GM12878 (cell line): ENCODE measurements at regions of chr14 and their contacts with region 1.

Region 1: DNA sequence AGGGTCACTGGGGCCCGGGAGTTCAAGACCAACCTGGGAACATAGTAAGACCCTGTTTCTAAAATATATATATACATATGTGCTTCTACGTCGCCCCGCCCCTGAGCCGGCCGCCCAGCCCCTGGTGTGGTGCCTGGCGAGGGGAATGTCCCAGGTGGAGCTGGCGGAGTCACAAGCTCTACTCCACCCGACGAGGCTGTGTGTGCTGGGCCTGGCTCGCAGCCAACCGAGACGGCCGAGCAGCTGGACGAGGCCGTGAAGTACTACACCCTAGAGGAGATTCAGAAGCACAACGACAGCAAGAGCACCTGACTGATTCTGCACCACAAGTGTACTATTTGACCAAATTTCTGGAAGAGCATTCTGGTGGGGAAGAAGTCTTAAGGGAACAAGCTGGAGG is 22.1 kb upstream of the ITPK1 start:
- DNase-seq: no peak
- ATAC-seq: no peak
- H3K4me3 ChIP-seq: no peak overlapping the region
- H3K27ac ChIP-seq: no peak overlapping the region
- H3K4me1 ChIP-seq: no peaks in the 10 kb centered on the region
- H3K27me3 ChIP-seq: no peaks in the 10 kb centered on the region
- CTCF ChIP-seq: no peak
- EP300 ChIP-seq: no peak
- POLR2A ChIP-seq: no peak
- RAD21 ChIP-seq: no peak

Region 2: GRCh38 chr14:92986254-92987147 is 151.4 kb before region 1 on chr14:
- CTCF ChIA-PET with region 1: no interaction called
- POLR2A ChIA-PET with region 1: no interaction called
- RAD21 ChIA-PET with region 1: no interaction called
- SMC1A ChIA-PET with region 1: no interaction called
- in situ Hi-C with region 1: no loop called
- intact Hi-C with region 1: no loop called
- DNase-seq: no peak
- ATAC-seq: no peak
- H3K4me3 ChIP-seq: no peak overlapping the region
- H3K27ac ChIP-seq: no peak overlapping the region
- H3K4me1 ChIP-seq: no peaks in the 10 kb centered on the region
- H3K27me3 ChIP-seq: no peaks in the 10 kb centered on the region
- CTCF ChIP-seq: no peak
- EP300 ChIP-seq: no peak
- POLR2A ChIP-seq: no peak
- RAD21 ChIP-seq: no peak

Region 3: GRCh38 chr14:93219103-93219726 is 81.4 kb after region 1 on chr14:
- CTCF ChIA-PET with region 1: interaction called, 9 read pairs
- POLR2A ChIA-PET with region 1: no interaction called
- RAD21 ChIA-PET with region 1: interaction called, 6 read pairs
- SMC1A ChIA-PET with region 1: interaction called, 7 read pairs
- in situ Hi-C with region 1: no loop called
- intact Hi-C with region 1: loop called (anchors 1 kb)
- DNase-seq: no peak
- ATAC-seq: peak; percentile 98
- H3K4me3 ChIP-seq: no peak overlapping the region
- H3K27ac ChIP-seq: no peak overlapping the region
- H3K4me1 ChIP-seq: no peaks in the 10 kb centered on the region
- H3K27me3 ChIP-seq: no peaks in the 10 kb centered on the region
- CTCF ChIP-seq: peak; percentile 74 to 87 (median 75)
- EP300 ChIP-seq: no peak
- POLR2A ChIP-seq: no peak
- RAD21 ChIP-seq: peak; percentile 84